Activated naive CD4-positive, alpha-beta T cell treated with anti-CD3 and anti-CD28 coated beads for 36 hours (primary cell): ENCODE measurements at regions of chr3 and their contacts with region 1.

Region 1: DNA sequence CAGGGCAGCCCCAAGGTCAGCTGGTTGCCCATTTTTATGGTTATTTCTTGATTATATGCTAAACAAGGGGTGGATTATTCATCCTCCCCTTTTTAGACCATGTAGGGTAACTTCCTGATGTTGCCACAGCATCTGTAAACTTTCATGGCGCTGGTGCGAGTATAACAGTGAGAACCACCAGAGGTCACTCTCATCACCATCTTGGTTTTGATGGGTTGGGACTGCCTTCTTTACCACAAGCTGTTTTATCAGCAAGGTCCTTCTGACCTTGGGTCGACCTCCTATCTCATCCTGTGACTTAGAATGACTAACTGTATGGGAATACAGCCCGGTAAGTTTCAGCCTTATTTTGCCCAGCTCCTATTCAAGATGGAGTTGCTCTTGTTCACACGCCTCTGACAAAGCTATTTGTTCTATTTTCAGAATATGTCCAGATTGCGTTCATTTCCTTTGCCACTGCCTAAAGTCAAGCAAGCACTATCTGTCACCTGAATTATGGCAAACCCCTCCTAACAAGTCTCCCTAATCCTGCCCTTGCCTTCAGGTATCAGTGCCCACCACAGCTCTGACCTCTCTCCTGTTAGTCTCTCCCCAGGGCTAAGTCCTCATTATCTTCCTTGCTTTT is 308.4 kb downstream of the ROBO2 start:
- DNase-seq: no peak
- H3K4me3 Mint-ChIP-seq: no peak overlapping the region
- H3K27ac Mint-ChIP-seq: no peak overlapping the region
- H3K4me1 Mint-ChIP-seq: no peaks in the 10 kb centered on the region
- H3K27me3 Mint-ChIP-seq: no peaks in the 10 kb centered on the region

Region 2: DNA sequence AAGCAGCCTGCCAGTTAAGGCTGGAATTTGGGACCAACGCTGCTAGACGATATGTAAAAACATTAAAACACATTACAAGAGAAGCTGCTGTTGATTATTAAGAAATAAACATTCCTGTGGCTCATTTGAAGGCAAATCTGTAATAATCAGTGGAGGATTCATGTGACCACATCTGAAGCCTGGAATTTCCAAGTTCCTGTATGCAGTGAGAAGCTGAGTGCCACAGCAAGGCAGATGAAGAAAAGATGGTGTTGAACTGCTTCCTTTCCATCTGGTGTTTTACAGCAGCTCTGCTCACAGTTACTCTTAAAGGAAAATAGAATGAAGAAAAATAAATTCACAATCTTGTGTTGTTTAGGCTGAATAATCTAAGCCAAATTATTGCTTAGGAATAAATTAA is 447.7 kb before region 1 on chr3:
- CTCF ChIA-PET with region 1: no interaction called
- intact Hi-C with region 1: no loop called
- DNase-seq: no peak
- H3K4me3 Mint-ChIP-seq: no peak overlapping the region
- H3K27ac Mint-ChIP-seq: no peak overlapping the region
- H3K4me1 Mint-ChIP-seq: no peaks in the 10 kb centered on the region
- H3K27me3 Mint-ChIP-seq: no peaks in the 10 kb centered on the region

Region 3: GRCh38 chr3:77825001-77825827 is 476.9 kb after region 1 on chr3:
- CTCF ChIA-PET with region 1: no interaction called
- intact Hi-C with region 1: no loop called
- DNase-seq: no peak
- H3K4me3 Mint-ChIP-seq: no peak overlapping the region
- H3K27ac Mint-ChIP-seq: no peak overlapping the region
- H3K4me1 Mint-ChIP-seq: no peaks in the 10 kb centered on the region
- H3K27me3 Mint-ChIP-seq: no peaks in the 10 kb centered on the region

Region 4: DNA sequence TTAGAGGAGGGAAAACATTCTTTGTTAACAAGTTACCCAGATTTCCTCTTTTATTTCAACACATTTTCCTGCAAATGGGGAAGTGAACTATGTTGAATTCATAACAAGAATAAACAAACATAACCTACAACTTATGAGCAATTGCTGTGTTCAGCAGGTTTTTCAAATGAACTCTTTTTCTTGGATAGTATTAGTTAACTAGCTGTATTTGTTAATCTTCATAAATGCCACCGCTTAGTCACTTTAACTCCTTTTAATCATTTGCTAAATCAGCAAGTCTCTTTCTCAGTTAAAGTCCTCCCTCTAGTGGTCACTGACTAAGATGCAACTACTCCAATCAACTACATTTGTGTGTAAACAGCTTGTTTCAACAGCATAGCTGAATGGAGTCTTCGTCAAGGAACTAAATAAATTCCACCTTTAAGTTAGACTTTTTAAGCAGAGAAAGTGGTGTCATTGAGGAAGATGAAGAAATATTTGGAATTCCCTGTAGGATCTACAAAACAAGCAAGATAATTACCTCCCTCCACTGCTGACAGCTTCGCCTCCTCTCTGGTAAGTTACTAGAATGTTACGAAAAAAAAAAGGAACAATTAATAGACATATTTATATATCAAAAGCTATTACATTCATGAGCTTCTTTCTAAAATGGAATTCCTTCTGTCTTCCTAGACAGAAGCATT is 1297.4 kb after region 1 on chr3:
- CTCF ChIA-PET with region 1: no interaction called
- intact Hi-C with region 1: loop called (anchors 10 kb)
- DNase-seq: no peak
- H3K4me3 Mint-ChIP-seq: no peak overlapping the region
- H3K27ac Mint-ChIP-seq: no peak overlapping the region
- H3K4me1 Mint-ChIP-seq: no peaks in the 10 kb centered on the region
- H3K27me3 Mint-ChIP-seq: no peaks in the 10 kb centered on the region